ENCODE measurements at regions of chr1 and their contacts with region 1.

Region 1: DNA sequence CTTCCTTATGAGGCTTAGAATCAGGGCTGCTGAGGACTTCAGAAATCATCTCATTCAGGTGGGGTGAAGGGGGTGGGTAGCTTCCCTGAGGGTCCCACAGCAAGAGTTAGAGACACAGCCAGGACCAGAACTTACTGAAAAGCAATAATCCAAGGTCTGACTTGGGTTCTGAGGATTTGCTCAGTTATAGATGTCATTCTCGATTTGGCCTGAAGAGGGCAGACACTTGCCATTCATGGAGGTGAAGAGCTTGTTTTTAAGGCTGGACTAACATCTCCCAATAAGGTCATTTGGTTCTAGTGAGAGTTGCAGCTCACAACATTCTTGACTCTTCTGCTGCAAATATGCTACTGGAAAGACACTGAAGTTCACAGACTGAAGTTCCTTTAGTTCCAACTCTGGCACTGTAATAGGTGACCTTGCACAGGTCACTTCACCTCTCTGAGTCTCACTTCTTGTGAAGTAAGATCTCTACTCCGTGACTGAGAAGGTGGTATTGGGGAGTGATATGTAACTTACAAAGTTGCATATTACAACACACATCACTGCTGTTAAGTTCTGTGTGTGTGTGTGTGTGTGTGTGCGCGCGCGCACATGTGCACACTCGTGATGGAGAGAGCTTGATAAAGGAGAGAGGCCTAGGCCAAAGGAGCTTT is 69.8 kb upstream of the DIRAS3 start:
- DNase-seq: peak in 1 of 2 experiments; percentile 75
- H3K4me3 ChIP-seq: no peak overlapping the region
- H3K27ac ChIP-seq: no peak overlapping the region
- H3K4me1 ChIP-seq: peaks cover 0 to 2% (median 0%) of the 10 kb centered on the region in 4 experiments; a peak in 1 of 7 replicates
- H3K27me3 ChIP-seq: no peaks in the 10 kb centered on the region
- CTCF ChIP-seq: peak in 2 of 3 experiments; percentile 86 to 93; a peak in 3 of 4 replicates
- EP300 ChIP-seq: no peak
- POLR2A ChIP-seq: no peak
- RAD21 ChIP-seq: peak; percentile 95 to 99

Region 2: DNA sequence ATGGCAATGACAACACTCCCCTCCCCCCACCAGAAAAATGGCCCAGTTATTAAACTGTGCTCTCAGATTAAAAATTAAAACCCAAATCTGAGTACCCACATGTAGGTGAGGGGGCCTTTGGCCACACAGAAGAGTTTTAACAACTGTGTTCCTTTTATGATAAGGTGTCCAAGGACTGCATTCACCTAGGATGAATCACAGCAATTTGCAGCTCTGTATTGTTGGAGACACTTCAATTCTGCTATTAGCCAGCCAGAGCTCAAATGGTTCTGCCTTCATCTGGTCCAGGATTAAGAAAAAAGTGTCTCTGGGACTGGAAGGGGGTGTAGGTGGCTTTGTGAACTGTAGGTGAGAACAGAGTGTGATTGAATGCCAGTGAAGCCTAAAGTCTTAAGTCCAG is 26.5 kb before region 1 on chr1:
- CTCF ChIA-PET with region 1: interaction called, 17 read pairs
- POLR2A ChIA-PET with region 1: no interaction called
- DNase-seq: no peak
- H3K4me3 ChIP-seq: no peak overlapping the region
- H3K27ac ChIP-seq: no peak overlapping the region
- H3K4me1 ChIP-seq: no peaks in the 10 kb centered on the region
- H3K27me3 ChIP-seq: no peaks in the 10 kb centered on the region
- CTCF ChIP-seq: no peak
- EP300 ChIP-seq: no peak
- POLR2A ChIP-seq: no peak
- RAD21 ChIP-seq: no peak

Region 3: GRCh38 chr1:68157416-68157815 is 37.2 kb after region 1 on chr1:
- CTCF ChIA-PET with region 1: interaction called, 24 read pairs
- POLR2A ChIA-PET with region 1: no interaction called
- DNase-seq: no peak
- H3K4me3 ChIP-seq: no peak overlapping the region
- H3K27ac ChIP-seq: no peak overlapping the region
- H3K4me1 ChIP-seq: no peaks in the 10 kb centered on the region
- H3K27me3 ChIP-seq: no peaks in the 10 kb centered on the region
- CTCF ChIP-seq: no peak
- EP300 ChIP-seq: no peak
- POLR2A ChIP-seq: no peak
- RAD21 ChIP-seq: no peak

Region 4: DNA sequence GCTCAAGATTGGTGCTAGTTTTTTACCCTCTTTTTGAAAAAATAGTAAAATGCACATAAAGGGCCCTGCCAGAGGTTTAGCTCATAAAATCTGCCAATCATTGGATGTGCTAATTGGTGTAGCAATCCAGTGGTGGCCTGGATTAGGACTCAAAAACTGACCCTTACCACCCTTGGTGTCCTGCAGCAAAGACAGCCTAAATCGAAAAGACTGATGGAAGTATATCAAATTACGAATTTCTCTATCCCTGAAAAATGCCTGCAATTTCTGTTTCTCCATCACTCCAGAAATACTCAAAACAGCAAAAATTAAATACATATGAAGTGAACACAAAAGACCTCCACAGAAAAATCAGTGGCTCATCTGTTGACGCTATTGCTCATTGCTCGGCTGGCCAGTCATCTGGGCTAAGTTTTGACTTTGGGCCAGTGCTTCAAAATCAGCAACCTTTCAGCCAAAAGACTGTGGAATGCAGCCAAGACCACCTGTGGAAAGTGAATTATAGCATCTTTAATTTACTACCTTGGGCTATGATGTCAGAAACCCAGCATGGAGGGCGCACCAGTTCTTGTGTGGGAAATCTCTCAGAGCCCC is 82.1 kb after region 1 on chr1:
- CTCF ChIA-PET with region 1: interaction called, 10 read pairs
- POLR2A ChIA-PET with region 1: no interaction called
- DNase-seq: no peak
- H3K4me3 ChIP-seq: no peak overlapping the region
- H3K27ac ChIP-seq: no peak overlapping the region
- H3K4me1 ChIP-seq: peaks cover 0 to 3% (median 0%) of the 10 kb centered on the region in 4 experiments; a peak in 1 of 7 replicates
- H3K27me3 ChIP-seq: no peaks in the 10 kb centered on the region
- CTCF ChIP-seq: no peak
- EP300 ChIP-seq: no peak
- POLR2A ChIP-seq: no peak
- RAD21 ChIP-seq: no peak

Region 5: DNA sequence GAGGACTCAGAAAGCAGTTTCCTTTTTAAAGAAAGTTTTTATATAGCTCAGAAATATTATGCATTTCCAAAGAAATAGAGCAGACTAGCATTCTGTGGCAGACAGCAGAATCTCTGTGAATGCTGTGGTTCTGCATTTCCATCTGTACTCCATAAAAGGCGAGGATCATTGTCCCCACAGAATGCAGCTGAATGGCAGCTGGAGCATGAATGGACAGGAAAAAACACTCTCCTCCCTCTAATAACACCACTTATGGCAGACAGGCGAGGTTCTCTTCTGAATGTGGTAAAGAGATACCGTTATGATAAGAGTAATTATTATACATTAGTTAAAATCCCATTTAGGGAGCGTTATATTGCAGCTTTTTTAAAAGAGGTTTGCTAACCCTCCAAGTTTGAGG is 193.5 kb after region 1 on chr1:
- CTCF ChIA-PET with region 1: interaction called, 16 read pairs
- POLR2A ChIA-PET with region 1: no interaction called
- DNase-seq: no peak
- H3K4me3 ChIP-seq: no peak overlapping the region
- H3K27ac ChIP-seq: no peak overlapping the region
- H3K4me1 ChIP-seq: no peaks in the 10 kb centered on the region
- H3K27me3 ChIP-seq: no peaks in the 10 kb centered on the region; a peak in 1 of 7 replicates
- CTCF ChIP-seq: no peak
- EP300 ChIP-seq: no peak
- POLR2A ChIP-seq: no peak
- RAD21 ChIP-seq: no peak

Region 6: DNA sequence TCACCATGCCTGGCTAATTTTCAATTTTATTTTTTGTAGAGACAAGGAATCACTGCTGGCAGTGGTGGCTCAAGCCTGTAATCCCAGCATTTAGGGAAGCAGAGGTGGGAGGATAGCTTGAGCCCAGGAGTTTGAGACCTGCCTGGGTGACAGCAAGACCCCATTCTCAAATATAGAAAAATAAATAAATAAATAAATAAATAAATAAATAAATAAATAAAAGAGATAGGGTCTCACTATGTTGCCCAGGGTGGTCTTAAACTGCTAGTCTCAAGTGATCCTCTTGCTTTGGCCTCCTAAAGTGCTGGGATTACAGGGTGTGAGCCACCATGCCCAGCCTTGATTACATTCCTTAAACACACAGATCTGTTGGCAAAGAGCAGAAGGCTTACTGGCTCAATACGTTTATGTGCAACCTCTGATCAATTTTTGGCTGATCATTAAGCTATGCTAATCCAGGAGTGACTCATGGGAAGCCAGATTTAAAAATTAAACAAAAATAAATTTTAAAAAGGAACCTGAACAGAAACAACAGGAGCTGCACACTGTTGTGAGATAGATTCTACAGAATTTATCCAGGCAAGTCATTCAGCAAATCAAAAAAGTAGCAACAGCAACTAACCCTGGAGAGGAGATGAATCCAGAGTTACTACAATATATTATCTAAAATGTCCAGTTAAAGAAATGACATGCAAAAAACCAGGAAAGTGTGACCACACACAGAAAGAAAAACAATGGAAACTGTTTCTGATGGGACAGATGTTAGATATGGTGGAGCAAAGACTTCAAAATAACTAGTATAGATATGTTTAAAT is 250.0 kb after region 1 on chr1:
- CTCF ChIA-PET with region 1: interaction called, 22 read pairs
- POLR2A ChIA-PET with region 1: no interaction called
- DNase-seq: no peak
- H3K4me3 ChIP-seq: no peak overlapping the region
- H3K27ac ChIP-seq: no peak overlapping the region
- H3K4me1 ChIP-seq: 0 out of 7 replicates have a peak, but pooled peaks cover 0 to 3% (median 0%) of the 10 kb centered on the region in 4 experiments
- H3K27me3 ChIP-seq: no peaks in the 10 kb centered on the region
- CTCF ChIP-seq: no peak
- EP300 ChIP-seq: no peak
- POLR2A ChIP-seq: no peak
- RAD21 ChIP-seq: no peak

Measured in H1 (cell line).